ENCODE measurements at regions of chr6 and their contacts with region 1.

Region 1: DNA sequence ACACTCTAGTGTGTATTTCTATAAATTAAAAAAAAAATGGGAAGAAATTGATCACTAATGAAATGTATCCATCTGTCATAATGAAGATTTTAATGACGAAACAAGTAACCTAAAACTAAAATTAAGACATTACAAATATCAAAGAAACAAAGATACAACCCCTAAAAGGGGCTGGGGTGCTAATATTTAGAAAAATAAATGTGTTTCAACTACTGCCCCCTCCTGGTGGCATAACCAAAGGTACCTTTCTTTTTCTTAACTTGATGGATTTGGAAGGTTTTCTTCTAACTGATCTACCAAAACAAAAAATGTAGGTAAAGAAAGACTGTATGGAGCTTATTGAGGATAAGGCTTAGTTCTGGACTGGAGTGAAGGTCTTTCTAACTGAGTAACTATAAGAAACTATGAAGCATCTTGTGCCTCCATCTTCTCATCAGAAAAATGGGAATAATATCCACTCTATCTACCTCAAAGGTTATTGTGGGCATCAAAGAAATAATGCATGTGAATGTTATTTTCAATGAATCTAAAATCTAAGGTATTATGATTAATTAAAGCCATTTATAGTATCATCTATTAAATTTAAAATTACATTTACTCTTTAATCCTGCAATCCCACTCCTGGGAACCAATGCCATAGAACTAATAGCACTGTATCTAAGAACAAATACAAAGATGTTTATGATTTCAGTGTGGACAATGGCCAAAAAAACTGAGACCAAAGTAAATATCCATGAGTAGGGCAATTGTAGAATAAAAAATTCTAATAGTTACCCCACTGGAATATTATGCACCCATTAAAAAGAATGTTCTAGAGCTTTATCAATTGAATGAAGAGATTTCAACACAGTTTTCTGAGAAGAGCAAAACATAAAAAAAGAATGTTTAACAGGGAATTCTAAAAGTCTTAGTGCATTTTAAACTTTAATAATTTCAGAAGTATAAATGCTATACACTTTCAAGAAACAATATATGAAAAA is 117.2 kb downstream of the BACH2 start:
- DNase-seq: peak; percentile 75
- H3K4me3 Mint-ChIP-seq: peak overlapping the region; percentile 11
- H3K27ac Mint-ChIP-seq: no peak overlapping the region
- H3K4me1 Mint-ChIP-seq: peaks cover 68% of the 10 kb centered on the region
- H3K27me3 Mint-ChIP-seq: no peaks in the 10 kb centered on the region

Region 2: GRCh38 chr6:89940225-89941027 is 239.1 kb before region 1 on chr6:
- intact Hi-C with region 1: loop called (anchors 2 kb)
- DNase-seq: peak; percentile 91
- H3K4me3 Mint-ChIP-seq: no peak overlapping the region
- H3K27ac Mint-ChIP-seq: peak overlapping the region; percentile 41
- H3K4me1 Mint-ChIP-seq: peaks cover 34% of the 10 kb centered on the region
- H3K27me3 Mint-ChIP-seq: no peaks in the 10 kb centered on the region

Region 3: DNA sequence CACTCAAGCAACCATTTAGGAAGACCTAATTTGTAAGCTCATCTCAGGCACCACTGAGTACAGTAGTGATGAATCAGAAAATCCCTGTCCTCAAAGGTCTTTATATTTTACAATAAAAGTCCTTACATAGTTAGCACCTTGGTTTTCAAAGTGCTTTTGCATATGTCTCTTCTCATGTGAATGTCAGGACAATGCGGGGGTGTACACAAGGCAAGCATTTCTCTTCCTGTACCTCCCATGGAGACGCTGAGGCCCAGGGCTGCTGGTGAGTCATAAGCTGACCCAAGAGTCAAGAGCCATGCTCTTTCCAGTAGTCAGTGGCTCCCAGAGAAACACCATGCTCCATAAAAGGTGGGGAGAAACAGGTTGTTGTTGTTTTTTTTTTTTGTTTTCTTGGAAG is 111.2 kb before region 1 on chr6:
- intact Hi-C with region 1: no loop called
- DNase-seq: no peak
- H3K4me3 Mint-ChIP-seq: peak overlapping the region; percentile 57
- H3K27ac Mint-ChIP-seq: peak overlapping the region; percentile 81
- H3K4me1 Mint-ChIP-seq: peaks cover 72% of the 10 kb centered on the region
- H3K27me3 Mint-ChIP-seq: no peaks in the 10 kb centered on the region

Region 4: GRCh38 chr6:90103056-90103800 is 76.3 kb before region 1 on chr6:
- intact Hi-C with region 1: loop called (anchors 1 kb)
- DNase-seq: peak; percentile 73
- H3K4me3 Mint-ChIP-seq: peak overlapping the region; percentile 64
- H3K27ac Mint-ChIP-seq: peak overlapping the region; percentile 88
- H3K4me1 Mint-ChIP-seq: peaks cover 60% of the 10 kb centered on the region
- H3K27me3 Mint-ChIP-seq: no peaks in the 10 kb centered on the region

Region 5: GRCh38 chr6:90156861-90157260 is 22.6 kb before region 1 on chr6:
- intact Hi-C with region 1: loop called (anchors 1 kb)
- DNase-seq: peak; percentile 84
- H3K4me3 Mint-ChIP-seq: peak overlapping the region; percentile 62
- H3K27ac Mint-ChIP-seq: peak overlapping the region; percentile 84
- H3K4me1 Mint-ChIP-seq: peaks cover 57% of the 10 kb centered on the region
- H3K27me3 Mint-ChIP-seq: no peaks in the 10 kb centered on the region